Activated CD4-positive, alpha-beta T cell treated with anti-CD3 and anti-CD28 coated beads for 36 hours (primary cell): ENCODE measurements at regions of chr1 and their contacts with region 1.

Region 1: GRCh38 chr1:226062558-226063223 is at the start of gene H3-3A:
- DNase-seq: peak; percentile 99
- ATAC-seq: peak; percentile 87
- H3K4me3 Mint-ChIP-seq: peak within 1 kb of the TSS; percentile 97
- H3K27ac Mint-ChIP-seq: peak within 1 kb of the TSS; percentile 100
- H3K4me1 Mint-ChIP-seq: peaks cover 34% of the 10 kb centered on the region
- H3K27me3 Mint-ChIP-seq: no peaks in the 10 kb centered on the region
- total RNA-seq, gene H3-3A: 176 to 275 TPM

Region 2: DNA sequence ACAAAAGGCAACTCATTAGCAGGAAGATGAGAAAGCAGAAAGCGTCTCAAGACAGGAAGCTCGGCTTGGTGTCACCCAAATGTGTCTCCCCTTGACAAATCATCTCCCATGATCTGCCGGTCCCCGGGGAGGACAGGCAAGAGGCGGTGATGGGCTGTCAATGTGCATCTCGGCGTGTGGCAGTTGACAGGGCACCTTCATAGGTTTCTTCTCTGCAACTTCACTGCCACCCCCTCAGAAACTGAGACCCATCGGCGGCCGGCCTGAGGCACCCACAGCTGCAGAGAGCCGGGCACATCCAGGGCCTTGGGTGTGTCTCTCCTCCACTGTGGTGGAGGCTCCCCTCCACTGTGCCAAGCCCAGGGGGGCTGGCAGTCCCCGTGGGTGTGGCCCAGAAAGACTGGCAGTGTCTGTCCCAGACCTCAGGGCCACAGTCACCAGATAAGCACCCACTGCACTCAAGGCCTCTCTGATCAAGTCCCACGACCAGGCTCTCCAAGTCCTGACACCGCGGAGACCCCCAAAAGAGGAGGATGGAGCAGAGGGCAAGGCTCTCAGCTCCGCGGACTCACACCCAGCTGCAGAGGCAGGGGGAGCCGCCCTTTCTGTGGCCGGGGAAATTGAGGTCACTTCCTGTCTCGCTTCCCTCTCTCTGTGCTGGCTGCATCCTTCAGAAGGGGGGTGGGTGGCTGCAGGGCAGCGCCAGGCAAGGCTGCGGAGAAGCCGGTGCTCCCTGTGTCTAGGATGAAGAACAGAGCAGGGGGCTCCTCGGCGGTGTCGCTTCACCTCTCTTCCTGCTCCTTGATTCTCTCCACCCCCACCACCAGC is 595.3 kb before region 1 on chr1:
- CTCF ChIA-PET with region 1: no interaction called
- POLR2A ChIA-PET with region 1: no interaction called
- intact Hi-C with region 1: loop called (anchors 1 to 5 kb)
- DNase-seq: peak; percentile 90
- ATAC-seq: peak; percentile 90
- H3K4me3 Mint-ChIP-seq: peak overlapping the region; percentile 85
- H3K27ac Mint-ChIP-seq: peak overlapping the region; percentile 98
- H3K4me1 Mint-ChIP-seq: peaks cover 25% of the 10 kb centered on the region
- H3K27me3 Mint-ChIP-seq: no peaks in the 10 kb centered on the region

Region 3: DNA sequence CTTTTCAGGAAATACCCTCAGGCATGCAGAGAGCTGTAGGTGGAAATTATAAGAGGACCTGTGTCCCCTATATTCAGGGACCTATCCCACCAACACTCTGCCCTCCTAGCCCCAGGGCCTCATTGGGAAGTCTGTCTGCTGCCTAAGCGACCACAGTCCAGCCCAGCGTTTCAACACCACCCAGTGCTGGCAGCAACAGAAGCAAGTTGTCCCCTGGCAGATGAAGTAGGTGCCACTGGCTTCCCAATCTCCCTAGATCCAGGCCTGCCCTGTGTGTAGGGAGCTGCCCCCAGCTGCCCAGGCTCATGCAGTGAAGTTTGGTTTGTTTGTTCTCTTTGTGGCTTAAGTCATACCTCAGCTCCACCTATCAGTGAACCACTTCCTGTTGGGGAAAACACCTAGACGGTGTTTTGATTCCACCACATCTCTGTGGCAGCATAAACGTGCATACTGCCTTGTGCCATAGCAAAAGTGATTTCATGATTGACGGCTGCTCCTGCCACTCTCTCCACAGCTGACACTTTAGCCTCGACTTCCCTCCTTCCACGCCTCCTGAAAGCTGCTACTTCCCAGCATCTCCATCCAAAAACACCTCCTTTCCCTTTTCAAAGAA is 165.6 kb before region 1 on chr1:
- CTCF ChIA-PET with region 1: no interaction called
- POLR2A ChIA-PET with region 1: no interaction called
- intact Hi-C with region 1: loop called in 1 of 2 experiments (anchors 1 kb)
- DNase-seq: peak; percentile 80
- ATAC-seq: peak; percentile 98
- H3K4me3 Mint-ChIP-seq: peak overlapping the region; percentile 59
- H3K27ac Mint-ChIP-seq: peak overlapping the region; percentile 95
- H3K4me1 Mint-ChIP-seq: peaks cover 42% of the 10 kb centered on the region
- H3K27me3 Mint-ChIP-seq: no peaks in the 10 kb centered on the region

Region 4: GRCh38 chr1:226074046-226074445 is 11.4 kb after region 1 on chr1:
- CTCF ChIA-PET with region 1: interaction called, 29 read pairs
- POLR2A ChIA-PET with region 1: interaction called, 6 read pairs
- intact Hi-C with region 1: no loop called
- DNase-seq: no peak
- ATAC-seq: no peak
- H3K4me3 Mint-ChIP-seq: no peak overlapping the region
- H3K27ac Mint-ChIP-seq: no peak overlapping the region
- H3K4me1 Mint-ChIP-seq: peaks cover 22% of the 10 kb centered on the region
- H3K27me3 Mint-ChIP-seq: no peaks in the 10 kb centered on the region

Region 5: GRCh38 chr1:226109829-226110248 is 47.1 kb after region 1 on chr1:
- CTCF ChIA-PET with region 1: interaction called, 9 read pairs
- POLR2A ChIA-PET with region 1: interaction called, 5 read pairs
- intact Hi-C with region 1: loop called in 1 of 2 experiments (anchors 1 kb)
- DNase-seq: peak; percentile 90
- ATAC-seq: peak; percentile 90
- H3K4me3 Mint-ChIP-seq: peak overlapping the region; percentile 81
- H3K27ac Mint-ChIP-seq: peak overlapping the region; percentile 59
- H3K4me1 Mint-ChIP-seq: peaks cover 9% of the 10 kb centered on the region
- H3K27me3 Mint-ChIP-seq: no peaks in the 10 kb centered on the region

Region 6: GRCh38 chr1:226407497-226408284 is 345.0 kb after region 1 on chr1 and contains the start of gene PARP1:
- CTCF ChIA-PET with region 1: interaction called, 3 read pairs
- POLR2A ChIA-PET with region 1: interaction called, 3 read pairs
- intact Hi-C with region 1: loop called (anchors 2 to 5 kb)
- DNase-seq: peak; percentile 93
- ATAC-seq: peak; percentile 94
- H3K4me3 Mint-ChIP-seq: peak within 1 kb of the TSS; percentile 88
- H3K27ac Mint-ChIP-seq: peak within 1 kb of the TSS; percentile 94
- H3K4me1 Mint-ChIP-seq: peaks cover 42% of the 10 kb centered on the region
- H3K27me3 Mint-ChIP-seq: no peaks in the 10 kb centered on the region
- total RNA-seq, gene PARP1: 237 to 242 TPM